ENCODE measurements at regions of chr1 and their contacts with region 1.

Region 1: GRCh38 chr1:235415008-235415904 is 48.0 kb downstream of the TBCE start:
- DNase-seq: peak; percentile 37 to 56 (median 45)
- H3K4me3 ChIP-seq: no peak overlapping the region
- H3K27ac ChIP-seq: no peak overlapping the region
- H3K4me1 ChIP-seq: no peaks in the 10 kb centered on the region
- H3K27me3 ChIP-seq: no peaks in the 10 kb centered on the region
- CTCF ChIP-seq: peak; percentile 21 to 56 (median 42)
- EP300 ChIP-seq: no peak
- POLR2A ChIP-seq: no peak

Region 2: GRCh38 chr1:234486498-234487448 is 928.5 kb before region 1 on chr1:
- intact Hi-C with region 1: loop called in 1 of 4 experiments (anchors 10 kb)
- DNase-seq: peak in 2 of 5 donors; percentile 26 to 58
- H3K4me3 ChIP-seq: no peak overlapping the region
- H3K27ac ChIP-seq: no peak overlapping the region
- H3K4me1 ChIP-seq: no peaks in the 10 kb centered on the region
- H3K27me3 ChIP-seq: no peaks in the 10 kb centered on the region
- CTCF ChIP-seq: peak in 2 of 3 donors; percentile 74 to 79
- EP300 ChIP-seq: no peak
- POLR2A ChIP-seq: no peak

Region 3: GRCh38 chr1:235100194-235100772 is 315.0 kb before region 1 on chr1:
- intact Hi-C with region 1: loop called in 3 of 4 experiments (anchors 5 to 10 kb)
- DNase-seq: peak in 3 of 5 donors; percentile 42 to 46 (median 46)
- H3K4me3 ChIP-seq: no peak overlapping the region
- H3K27ac ChIP-seq: no peak overlapping the region
- H3K4me1 ChIP-seq: peaks cover 3% of the 10 kb centered on the region
- H3K27me3 ChIP-seq: no peaks in the 10 kb centered on the region
- CTCF ChIP-seq: no peak
- EP300 ChIP-seq: no peak
- POLR2A ChIP-seq: no peak

Region 4: GRCh38 chr1:235246022-235246991 is 168.9 kb before region 1 on chr1:
- intact Hi-C with region 1: loop called in 2 of 4 experiments (anchors 5 to 10 kb)
- DNase-seq: no peak
- H3K4me3 ChIP-seq: no peak overlapping the region
- H3K27ac ChIP-seq: no peak overlapping the region
- H3K4me1 ChIP-seq: no peaks in the 10 kb centered on the region
- H3K27me3 ChIP-seq: no peaks in the 10 kb centered on the region
- CTCF ChIP-seq: no peak
- EP300 ChIP-seq: no peak
- POLR2A ChIP-seq: no peak

Region 5: GRCh38 chr1:235253219-235253962 is 161.9 kb before region 1 on chr1:
- intact Hi-C with region 1: loop called in 3 of 4 experiments (anchors 5 to 10 kb)
- DNase-seq: peak in 4 of 5 donors; percentile 33 to 63 (median 45)
- H3K4me3 ChIP-seq: no peak overlapping the region
- H3K27ac ChIP-seq: no peak overlapping the region
- H3K4me1 ChIP-seq: no peaks in the 10 kb centered on the region
- H3K27me3 ChIP-seq: no peaks in the 10 kb centered on the region
- CTCF ChIP-seq: peak in 2 of 3 donors; percentile 43 to 51
- EP300 ChIP-seq: no peak
- POLR2A ChIP-seq: no peak

Region 6: GRCh38 chr1:235328357-235329138 is 86.7 kb before region 1 on chr1 and contains the start of gene GGPS1:
- intact Hi-C with region 1: no loop called
- DNase-seq: peak; percentile 97 to 98 (median 98)
- H3K4me3 ChIP-seq: peak within 1 kb of the TSS; percentile 89
- H3K27ac ChIP-seq: peak within 1 kb of the TSS; percentile 82 to 95
- H3K4me1 ChIP-seq: peaks cover 6% of the 10 kb centered on the region
- H3K27me3 ChIP-seq: no peaks in the 10 kb centered on the region
- CTCF ChIP-seq: peak in 1 of 3 donors; percentile 6
- EP300 ChIP-seq: peak; percentile 24
- POLR2A ChIP-seq: peak; percentile 98
- total RNA-seq, gene GGPS1: 15.3 to 42.4 (median 31.7) TPM

Region 7: DNA sequence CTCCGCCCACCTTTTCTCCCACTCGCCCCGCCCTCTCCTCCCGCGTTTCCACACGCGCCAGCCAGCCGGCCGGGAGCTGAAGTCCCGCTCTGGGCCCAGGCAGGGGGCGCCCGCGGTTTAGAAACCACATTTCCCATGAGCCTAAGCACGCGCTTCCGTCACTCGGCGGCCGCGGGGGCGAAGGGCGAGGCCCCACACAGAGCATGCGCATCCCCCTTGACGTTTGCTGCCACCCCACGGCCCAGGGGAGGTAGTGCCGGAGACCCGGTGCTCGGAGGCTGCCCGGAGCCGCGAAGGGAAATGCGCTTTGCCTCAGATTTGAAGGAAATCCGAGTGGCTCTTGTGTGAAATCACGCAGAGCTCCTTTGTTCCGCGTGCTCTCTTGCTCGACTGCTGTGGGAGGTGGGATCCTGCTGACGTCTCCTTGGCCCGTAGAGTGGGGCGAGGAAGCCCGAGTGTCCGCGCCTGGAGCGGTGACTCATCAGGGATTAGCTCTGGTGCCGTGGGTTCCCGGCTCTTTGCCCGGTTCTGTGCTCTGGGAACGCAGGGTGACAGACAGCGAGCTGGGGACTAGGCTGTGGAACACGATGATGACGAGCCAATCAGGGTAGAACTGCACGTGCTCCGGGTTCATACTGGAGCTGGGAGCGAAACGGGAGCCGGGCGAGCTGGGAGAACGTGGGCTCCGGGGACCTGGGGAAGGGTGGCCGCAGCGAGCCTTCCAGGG is 89.4 kb after region 1 on chr1:
- intact Hi-C with region 1: no loop called
- DNase-seq: peak; percentile 99 to 100 (median 100)
- H3K4me3 ChIP-seq: peak overlapping the region; percentile 93
- H3K27ac ChIP-seq: peak overlapping the region; percentile 89 to 95
- H3K4me1 ChIP-seq: peaks cover 4% of the 10 kb centered on the region
- H3K27me3 ChIP-seq: no peaks in the 10 kb centered on the region
- CTCF ChIP-seq: peak; percentile 94 to 99 (median 99)
- EP300 ChIP-seq: peak; percentile 2
- POLR2A ChIP-seq: peak; percentile 86